HEK293 (cell line): ENCODE measurements at regions of chr11 and their contacts with region 1.

Region 1: DNA sequence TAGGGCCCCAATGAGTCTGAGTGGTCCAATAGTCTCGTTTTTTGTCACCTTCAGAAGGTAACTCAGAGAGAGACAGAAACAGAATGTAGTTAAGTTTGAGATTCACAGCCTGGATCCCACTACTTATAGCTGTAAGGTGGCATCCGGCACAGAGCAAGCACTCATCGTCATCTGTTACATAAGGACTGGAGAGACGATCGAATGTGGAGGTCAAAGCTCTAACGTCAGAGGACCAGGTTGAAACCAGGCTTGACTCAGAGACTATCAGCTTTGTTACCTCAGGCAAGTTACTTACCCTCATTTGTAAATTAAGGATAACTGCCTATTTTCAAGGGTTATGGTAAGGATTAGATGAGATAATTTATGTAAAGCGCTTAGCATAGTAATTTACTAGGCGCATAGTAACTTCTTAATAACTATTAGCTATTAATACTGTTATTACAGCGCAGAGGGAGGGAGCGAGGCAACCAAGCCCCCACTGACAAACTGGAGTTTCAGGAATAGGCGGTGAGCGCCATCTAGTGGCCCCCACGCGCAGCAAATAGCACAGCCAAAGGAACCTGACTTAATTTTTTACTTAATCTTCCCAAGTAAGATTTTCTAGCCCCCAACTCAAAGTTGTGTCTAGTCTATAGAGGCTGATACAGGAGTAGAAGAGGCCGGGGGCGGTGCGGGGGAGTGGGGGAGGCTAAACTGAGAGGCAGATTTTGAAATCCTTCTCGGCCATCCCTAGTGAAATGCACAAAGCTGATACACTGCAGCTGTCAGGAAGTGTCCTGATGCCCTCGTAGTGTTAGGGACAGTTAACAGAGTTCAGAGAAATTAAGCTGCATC is 29.0 kb upstream of the API5 start:
- H3K4me3 ChIP-seq: no peak overlapping the region
- H3K27ac ChIP-seq: no peak overlapping the region
- H3K4me1 ChIP-seq: no peaks in the 10 kb centered on the region
- CTCF ChIP-seq: no peak

Region 2: DNA sequence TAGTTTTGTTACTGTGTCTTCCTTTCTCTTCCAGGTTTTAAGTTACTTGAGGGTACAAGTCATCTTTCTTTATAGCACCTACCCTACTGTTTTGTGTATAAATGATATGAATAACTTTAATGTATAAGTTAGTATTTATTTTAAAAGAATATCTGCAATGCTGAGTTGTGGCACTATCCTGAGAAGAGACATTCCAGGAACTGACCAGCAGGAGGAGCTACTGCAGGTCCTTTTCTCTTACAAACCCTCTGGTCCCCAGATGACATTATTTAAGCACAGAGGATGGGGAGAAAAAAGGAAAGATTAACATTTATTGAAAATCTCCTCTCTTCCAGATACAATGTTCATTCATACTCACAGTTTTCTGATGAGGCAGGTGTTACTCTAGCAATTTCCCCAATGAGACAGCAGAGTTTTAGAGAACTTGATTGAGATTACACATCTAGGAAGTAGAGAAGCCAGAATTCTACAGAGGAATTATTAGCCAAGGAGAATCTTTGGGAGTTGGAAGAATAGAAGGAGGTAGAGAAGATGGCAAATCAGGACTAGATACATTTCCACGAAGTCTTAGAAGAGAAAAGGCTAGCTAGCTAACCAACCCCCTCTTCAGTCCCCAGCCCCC is 512.3 kb before region 1 on chr11:
- CTCF ChIA-PET with region 1: interaction called, 18 read pairs
- POLR2A ChIA-PET with region 1: no interaction called
- H3K4me3 ChIP-seq: no peak overlapping the region
- H3K27ac ChIP-seq: no peak overlapping the region
- H3K4me1 ChIP-seq: no peaks in the 10 kb centered on the region
- CTCF ChIP-seq: no peak

Region 3: DNA sequence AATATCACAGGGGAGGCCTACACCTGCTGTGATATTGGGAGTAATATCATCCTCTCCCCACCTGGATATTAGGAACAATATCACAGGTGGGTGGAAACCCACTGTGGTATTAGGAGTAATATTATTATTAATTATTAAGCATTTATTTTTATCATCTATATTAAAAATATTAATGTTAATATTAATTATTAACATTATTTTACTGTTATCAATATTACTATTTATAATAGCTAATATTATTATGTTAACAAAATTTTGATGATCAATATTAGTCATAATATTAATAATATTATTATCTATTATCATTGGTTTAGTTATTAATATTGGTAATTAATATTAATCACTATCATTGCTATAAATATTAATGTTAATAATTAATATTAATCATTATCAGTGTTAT is 132.1 kb before region 1 on chr11:
- CTCF ChIA-PET with region 1: no interaction called
- POLR2A ChIA-PET with region 1: no interaction called
- H3K4me3 ChIP-seq: no peak overlapping the region
- H3K27ac ChIP-seq: no peak overlapping the region
- H3K4me1 ChIP-seq: no peaks in the 10 kb centered on the region
- CTCF ChIP-seq: no peak

Region 4: GRCh38 chr11:43269254-43269918 is 13.4 kb before region 1 on chr11:
- CTCF ChIA-PET with region 1: interaction called, 19 read pairs
- POLR2A ChIA-PET with region 1: no interaction called
- H3K4me3 ChIP-seq: no peak overlapping the region
- H3K27ac ChIP-seq: no peak overlapping the region
- H3K4me1 ChIP-seq: no peaks in the 10 kb centered on the region
- CTCF ChIP-seq: no peak

Region 5: DNA sequence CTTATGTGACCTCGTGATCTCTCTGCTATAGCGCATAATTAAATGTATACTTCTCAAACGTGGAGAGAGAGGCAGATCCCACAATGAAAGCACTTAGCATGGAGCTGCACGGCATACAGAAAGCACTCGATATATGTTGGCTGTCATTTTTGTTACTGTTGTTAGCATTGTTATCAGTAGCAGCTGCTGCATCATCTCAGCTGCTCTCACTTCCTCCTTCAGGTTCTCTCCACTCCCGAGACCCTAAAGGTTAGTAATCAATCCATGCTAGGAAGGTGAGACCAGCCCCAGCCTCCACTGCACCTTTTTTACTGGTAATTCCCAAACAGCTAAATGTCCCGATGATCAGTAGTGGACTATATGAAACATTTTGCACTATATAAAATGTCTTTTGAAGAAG is 15.6 kb after region 1 on chr11:
- CTCF ChIA-PET with region 1: interaction called, 17 read pairs
- POLR2A ChIA-PET with region 1: no interaction called
- H3K4me3 ChIP-seq: no peak overlapping the region
- H3K27ac ChIP-seq: no peak overlapping the region
- H3K4me1 ChIP-seq: no peaks in the 10 kb centered on the region
- CTCF ChIP-seq: no peak

Region 6: GRCh38 chr11:43399983-43400630 is 117.3 kb after region 1 on chr11:
- CTCF ChIA-PET with region 1: no interaction called
- POLR2A ChIA-PET with region 1: no interaction called
- H3K4me3 ChIP-seq: no peak overlapping the region
- H3K27ac ChIP-seq: no peak overlapping the region
- H3K4me1 ChIP-seq: no peaks in the 10 kb centered on the region
- CTCF ChIP-seq: no peak

Region 7: DNA sequence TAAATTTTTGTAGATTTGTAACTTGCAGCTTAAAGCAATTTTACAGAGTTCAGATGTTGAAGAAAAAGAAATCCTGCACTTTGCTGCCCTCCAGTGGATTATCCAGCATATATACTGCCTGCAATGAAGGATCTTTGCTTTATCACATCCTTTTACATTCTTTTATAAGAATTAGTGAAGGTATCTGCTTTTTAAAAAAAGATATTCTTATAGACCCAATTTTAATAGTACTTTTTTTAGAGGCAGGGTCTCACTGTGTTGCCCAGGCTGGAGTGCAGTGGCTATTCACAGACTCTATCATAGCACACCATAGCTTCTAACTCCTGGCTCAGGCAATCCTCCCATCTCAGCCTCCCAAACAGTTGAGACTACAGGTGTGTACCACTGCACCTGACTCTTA is 136.6 kb after region 1 on chr11:
- CTCF ChIA-PET with region 1: interaction called, 14 read pairs
- POLR2A ChIA-PET with region 1: no interaction called
- H3K4me3 ChIP-seq: no peak overlapping the region
- H3K27ac ChIP-seq: no peak overlapping the region
- H3K4me1 ChIP-seq: no peaks in the 10 kb centered on the region
- CTCF ChIP-seq: no peak